HEK293 (cell line): ENCODE measurements at regions of chr9 and their contacts with region 1.

Region 1: GRCh38 chr9:2362170-2362569 is 259.4 kb upstream of the VLDLR start:
- H3K4me3 ChIP-seq: no peak overlapping the region
- H3K27ac ChIP-seq: no peak overlapping the region
- H3K4me1 ChIP-seq: no peaks in the 10 kb centered on the region
- CTCF ChIP-seq: no peak

Region 2: GRCh38 chr9:2319421-2319820 is 42.7 kb before region 1 on chr9:
- CTCF ChIA-PET with region 1: interaction called, 10 read pairs
- POLR2A ChIA-PET with region 1: no interaction called
- H3K4me3 ChIP-seq: no peak overlapping the region
- H3K27ac ChIP-seq: no peak overlapping the region
- H3K4me1 ChIP-seq: no peaks in the 10 kb centered on the region
- CTCF ChIP-seq: no peak